ENCODE measurements at regions of chr6 and their contacts with region 1.

Region 1: GRCh38 chr6:116847227-116847626 is 18.3 kb upstream of the GPRC6A start:
- DNase-seq: no peak
- H3K4me3 ChIP-seq: no peak overlapping the region
- H3K27ac ChIP-seq: no peak overlapping the region
- H3K4me1 ChIP-seq: no peaks in the 10 kb centered on the region
- H3K27me3 ChIP-seq: peaks cover 3% of the 10 kb centered on the region
- CTCF ChIP-seq: peak in 3 of 4 experiments; percentile 22 to 42 (median 24)
- POLR2A ChIP-seq: no peak

Region 2: GRCh38 chr6:116779573-116780164 is 67.6 kb before region 1 on chr6:
- intact Hi-C with region 1: loop called (anchors 5 kb)
- DNase-seq: no peak
- H3K4me3 ChIP-seq: no peak overlapping the region
- H3K27ac ChIP-seq: no peak overlapping the region
- H3K4me1 ChIP-seq: no peaks in the 10 kb centered on the region
- H3K27me3 ChIP-seq: no peaks in the 10 kb centered on the region
- CTCF ChIP-seq: peak; percentile 9 to 55 (median 48)
- POLR2A ChIP-seq: no peak